ENCODE measurements at regions of chr6 and their contacts with region 1.

Region 1: DNA sequence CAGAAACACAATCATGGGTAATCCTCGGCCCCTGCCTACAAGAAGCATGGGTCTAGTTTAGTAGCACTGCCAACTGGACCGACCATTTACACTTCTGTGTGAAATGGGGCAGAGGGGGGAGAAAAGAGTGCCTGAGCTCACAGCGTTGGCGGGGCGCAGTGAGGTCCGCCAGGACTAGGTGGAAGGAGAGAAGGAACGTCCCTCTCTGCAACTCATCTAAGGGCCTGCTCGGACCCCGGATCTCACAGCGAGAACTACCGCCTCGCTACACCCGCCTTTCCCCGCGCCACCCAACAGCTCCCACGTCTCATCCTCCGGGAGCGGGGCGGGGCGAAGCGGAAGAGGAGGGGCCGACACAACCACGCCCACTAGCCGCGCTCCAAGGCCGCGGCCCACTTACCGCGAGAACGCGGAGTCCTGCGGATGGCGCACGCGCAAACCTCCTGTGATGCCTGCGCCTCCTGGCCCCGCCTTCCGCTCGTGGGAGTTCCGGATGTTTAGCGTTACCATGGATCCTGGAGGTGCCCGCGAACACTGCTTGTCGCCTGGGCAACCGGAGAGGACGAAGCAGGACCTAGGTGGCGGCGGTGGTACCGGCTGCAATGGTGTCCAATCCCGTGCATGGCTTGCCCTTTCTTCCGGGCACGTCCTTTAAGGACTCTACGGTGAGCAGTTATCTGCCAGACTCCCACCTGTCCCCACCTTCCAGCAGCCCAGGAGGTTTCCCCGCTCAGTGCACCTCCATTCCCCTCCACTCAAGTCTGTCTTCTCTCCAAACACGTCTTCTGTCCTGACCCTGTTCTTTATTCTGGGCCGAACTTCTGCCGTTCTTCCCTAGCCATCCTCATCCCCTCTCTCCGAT is at the start of gene EFHC1:
- DNase-seq: peak; percentile 97 to 100 (median 98)

Region 2: GRCh38 chr6:52577022-52577777 is 157.2 kb after region 1 on chr6 and contains the start of gene TRAM2:
- intact Hi-C with region 1: loop called (anchors 2 kb)
- DNase-seq: peak; percentile 57 to 96 (median 72)

Region 3: DNA sequence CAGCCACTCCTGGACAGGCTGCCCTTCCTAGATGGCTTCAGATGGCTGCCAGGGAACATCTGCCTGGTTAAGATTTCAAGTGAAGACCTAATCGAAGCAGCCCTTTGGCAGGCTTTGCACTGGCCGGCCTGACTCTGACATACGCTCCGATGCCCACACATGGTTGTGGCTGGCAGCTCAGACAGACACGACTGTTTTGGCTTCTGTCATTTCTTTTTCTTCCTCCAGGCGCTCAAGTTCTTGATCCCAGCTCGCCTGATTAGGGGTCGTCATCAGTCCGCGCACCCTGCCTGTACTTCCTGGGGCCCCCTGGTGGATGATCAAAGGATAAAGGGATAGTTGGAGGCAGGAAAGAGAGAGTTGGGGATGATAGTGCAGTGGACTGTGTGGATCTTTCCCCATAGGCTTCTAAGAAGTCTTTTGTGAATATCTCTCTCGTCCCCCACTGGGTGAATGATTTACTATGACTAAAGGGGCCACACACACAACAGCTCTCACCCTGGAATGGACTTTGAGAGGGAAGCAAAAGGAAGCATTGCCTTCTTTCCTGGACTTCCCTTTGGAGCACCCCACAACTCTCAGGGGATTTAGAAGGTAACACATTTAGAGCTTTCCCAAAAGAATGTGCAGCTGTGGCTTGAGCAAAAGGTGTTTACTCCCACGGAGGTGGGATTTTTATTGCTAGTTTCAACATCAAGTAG is 178.2 kb after region 1 on chr6:
- intact Hi-C with region 1: loop called (anchors 1 kb)
- DNase-seq: peak in 9 of 10 donors; percentile 27 to 88 (median 48)

Region 4: DNA sequence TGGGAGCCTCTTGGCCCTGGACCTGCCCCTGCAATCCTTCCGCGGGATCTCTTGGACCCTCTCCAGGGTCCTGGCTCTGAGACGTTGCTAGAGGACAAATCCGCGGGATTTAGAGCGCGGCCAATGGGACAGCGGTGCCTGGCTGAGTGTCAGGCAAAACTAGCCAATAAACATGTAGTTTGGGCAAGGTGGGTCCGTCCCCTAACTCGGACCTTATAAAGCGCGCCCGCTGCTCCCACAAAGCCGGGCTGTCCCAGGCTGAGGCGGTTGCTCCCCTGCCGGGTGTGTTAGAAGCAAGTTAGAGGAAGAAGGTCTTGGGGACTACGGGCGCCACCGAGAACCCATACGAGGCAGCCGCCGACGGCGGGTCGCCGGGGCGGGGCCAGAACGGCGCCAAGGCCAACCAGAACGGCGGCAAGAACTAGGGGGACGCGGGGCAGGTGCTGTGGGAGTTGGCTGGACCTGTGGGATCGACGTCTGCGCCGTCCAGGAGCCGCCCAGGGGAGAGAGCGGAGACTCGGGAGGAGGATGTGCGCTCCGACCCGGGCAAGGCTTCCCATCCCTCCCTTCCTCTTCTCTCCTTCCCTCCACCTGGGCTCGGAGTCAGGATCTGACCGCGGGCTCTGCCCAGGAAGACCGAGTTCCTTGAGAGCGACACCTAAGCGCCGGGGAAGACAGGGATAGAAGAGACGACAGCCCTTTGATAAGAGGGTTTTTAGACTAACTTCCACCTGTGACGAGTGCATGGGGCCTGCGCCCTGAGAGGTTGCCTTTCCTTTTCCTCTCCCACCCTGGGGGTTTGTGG is 244.3 kb after region 1 on chr6:
- intact Hi-C with region 1: loop called (anchors 1 kb)
- DNase-seq: peak; percentile 73 to 98 (median 86)

Measured in posterior cingulate gyrus (tissue), 11 donors.